H1 (cell line): ENCODE measurements at regions of chr14 and their contacts with region 1.

Region 1: GRCh38 chr14:95222151-95222631 is 64.9 kb upstream of the DICER1 start:
- DNase-seq: no peak
- H3K4me3 ChIP-seq: no peak overlapping the region
- H3K27ac ChIP-seq: no peak overlapping the region
- H3K4me1 ChIP-seq: peaks cover 11 to 36% (median 25%) of the 10 kb centered on the region in 4 experiments
- H3K27me3 ChIP-seq: peaks cover 0 to 8% (median 3%) of the 10 kb centered on the region in 4 experiments; a peak in 4 of 7 replicates
- CTCF ChIP-seq: no peak
- EP300 ChIP-seq: no peak
- POLR2A ChIP-seq: no peak
- RAD21 ChIP-seq: no peak

Region 2: GRCh38 chr14:95196290-95196689 is 25.9 kb before region 1 on chr14:
- CTCF ChIA-PET with region 1: interaction called, 10 read pairs
- POLR2A ChIA-PET with region 1: interaction called, 3 read pairs
- DNase-seq: no peak
- H3K4me3 ChIP-seq: no peak overlapping the region
- H3K27ac ChIP-seq: no peak overlapping the region
- H3K4me1 ChIP-seq: peaks cover 12 to 25% (median 18%) of the 10 kb centered on the region in 4 experiments
- H3K27me3 ChIP-seq: no peaks in the 10 kb centered on the region
- CTCF ChIP-seq: peak in 2 of 3 experiments; percentile 22 to 31; a peak in 1 of 4 replicates
- EP300 ChIP-seq: no peak
- POLR2A ChIP-seq: no peak
- RAD21 ChIP-seq: peak; percentile 38 to 54

Region 3: DNA sequence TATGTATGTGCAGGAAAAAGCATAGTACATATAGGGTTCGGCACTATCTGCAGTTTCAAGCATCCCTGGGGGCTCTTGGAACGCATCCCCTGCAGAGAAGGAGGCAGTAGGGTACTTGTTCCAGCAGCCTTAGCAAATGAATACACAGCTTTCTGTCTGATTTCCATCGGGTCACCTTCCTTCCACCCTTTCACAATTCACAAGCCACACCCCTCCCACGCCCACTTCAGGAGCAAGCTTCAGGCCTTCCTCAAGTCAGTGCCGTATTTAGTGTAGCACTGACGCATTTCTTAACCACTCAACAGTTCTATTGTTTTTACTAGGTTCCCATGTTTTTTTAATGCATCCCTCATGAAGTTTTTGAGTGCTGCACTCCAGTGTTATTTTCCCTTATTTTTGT is 33.3 kb after region 1 on chr14:
- CTCF ChIA-PET with region 1: no interaction called
- POLR2A ChIA-PET with region 1: no interaction called
- DNase-seq: peak; percentile 73 to 76
- H3K4me3 ChIP-seq: peak overlapping the region in 1 of 4 experiments; percentile 31; a peak in 2 of 8 replicates
- H3K27ac ChIP-seq: no peak overlapping the region
- H3K4me1 ChIP-seq: peaks cover 6 to 32% (median 21%) of the 10 kb centered on the region in 4 experiments
- H3K27me3 ChIP-seq: no peaks in the 10 kb centered on the region
- CTCF ChIP-seq: no peak
- EP300 ChIP-seq: no peak
- POLR2A ChIP-seq: no peak
- RAD21 ChIP-seq: no peak; a peak in 1 of 4 replicates